GM12878 (cell line): ENCODE measurements at regions of chr10 and their contacts with region 1.

Region 1: DNA sequence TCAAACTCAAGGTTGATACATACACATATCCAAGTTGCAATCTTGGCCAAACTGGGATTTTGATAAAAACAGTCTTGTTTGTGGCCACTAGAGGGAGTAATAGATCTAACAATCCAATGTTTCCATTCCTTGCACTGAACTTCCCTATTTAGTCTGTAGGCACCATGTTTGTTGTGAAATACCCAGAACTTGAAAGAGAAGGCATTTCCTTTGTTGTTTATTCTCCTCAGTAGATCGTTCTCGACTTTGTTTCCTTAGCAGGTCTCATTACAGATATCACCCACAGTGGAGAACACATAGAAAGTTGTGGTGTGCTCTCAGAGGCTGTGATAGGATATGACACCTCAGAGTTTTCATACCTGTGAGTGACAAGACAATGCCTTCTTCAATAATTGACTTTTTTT is 70.3 kb upstream of the MXI1 start:
- DNase-seq: peak; percentile 48
- ATAC-seq: peak; percentile 83
- H3K4me3 ChIP-seq: no peak overlapping the region
- H3K27ac ChIP-seq: no peak overlapping the region
- H3K4me1 ChIP-seq: peaks cover 5% of the 10 kb centered on the region
- H3K27me3 ChIP-seq: no peaks in the 10 kb centered on the region; a peak in 1 of 4 replicates
- CTCF ChIP-seq: peak; percentile 57 to 79 (median 72)
- EP300 ChIP-seq: no peak
- POLR2A ChIP-seq: no peak
- RAD21 ChIP-seq: peak; percentile 89

Region 2: DNA sequence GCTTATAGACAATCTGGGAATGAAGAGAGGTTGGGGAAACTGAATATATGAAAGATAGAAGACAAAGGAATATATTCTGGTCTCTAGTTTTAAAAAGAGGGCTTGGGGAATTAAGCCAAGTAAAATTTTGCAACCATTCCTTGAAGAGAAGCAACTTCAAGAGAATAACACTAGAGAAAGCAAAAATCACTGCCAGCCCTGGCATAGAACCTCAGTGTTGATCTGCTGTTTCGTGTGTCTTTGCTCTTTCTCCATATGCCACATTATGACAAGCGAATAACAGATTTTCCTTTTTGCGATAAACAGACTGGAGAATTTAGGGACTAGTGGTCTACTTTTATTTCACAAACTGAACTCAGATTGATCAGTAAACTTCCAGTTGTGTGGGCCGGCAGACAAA is 346.5 kb before region 1 on chr10:
- CTCF ChIA-PET with region 1: no interaction called
- POLR2A ChIA-PET with region 1: no interaction called
- RAD21 ChIA-PET with region 1: no interaction called
- SMC1A ChIA-PET with region 1: no interaction called
- in situ Hi-C with region 1: no loop called
- intact Hi-C with region 1: no loop called
- DNase-seq: no peak
- ATAC-seq: no peak
- H3K4me3 ChIP-seq: no peak overlapping the region
- H3K27ac ChIP-seq: no peak overlapping the region
- H3K4me1 ChIP-seq: no peaks in the 10 kb centered on the region
- H3K27me3 ChIP-seq: no peaks in the 10 kb centered on the region; a peak in 1 of 4 replicates
- CTCF ChIP-seq: no peak
- EP300 ChIP-seq: no peak
- POLR2A ChIP-seq: no peak
- RAD21 ChIP-seq: no peak

Region 3: DNA sequence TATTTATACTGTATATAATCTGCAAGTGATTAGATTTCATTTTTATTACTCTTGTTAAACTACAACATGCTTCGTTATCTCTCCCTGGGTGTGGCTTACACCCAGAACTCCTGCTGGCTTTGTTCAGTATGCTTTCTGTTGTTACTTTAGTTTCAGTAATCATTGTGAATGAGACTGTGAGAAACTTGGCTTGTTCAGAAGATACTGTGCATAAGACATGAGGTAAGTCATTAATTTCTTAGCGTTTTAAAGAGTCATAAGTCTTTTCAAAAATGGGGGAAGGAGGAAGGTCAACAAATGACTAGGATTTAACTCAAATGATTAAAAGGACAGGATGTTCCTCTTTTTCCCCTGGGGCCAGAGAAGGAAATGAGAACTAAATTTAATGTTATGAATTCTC is 140.9 kb before region 1 on chr10:
- CTCF ChIA-PET with region 1: interaction called, 11 read pairs
- POLR2A ChIA-PET with region 1: no interaction called
- RAD21 ChIA-PET with region 1: interaction called, 4 read pairs
- SMC1A ChIA-PET with region 1: no interaction called
- in situ Hi-C with region 1: no loop called
- intact Hi-C with region 1: no loop called
- DNase-seq: no peak
- ATAC-seq: peak; percentile 87
- H3K4me3 ChIP-seq: no peak overlapping the region
- H3K27ac ChIP-seq: peak overlapping the region; percentile 32; the same call in 1 of the 2 replicates
- H3K4me1 ChIP-seq: peaks cover 14% of the 10 kb centered on the region
- H3K27me3 ChIP-seq: no peaks in the 10 kb centered on the region
- CTCF ChIP-seq: no peak
- EP300 ChIP-seq: no peak
- POLR2A ChIP-seq: no peak
- RAD21 ChIP-seq: no peak

Region 4: DNA sequence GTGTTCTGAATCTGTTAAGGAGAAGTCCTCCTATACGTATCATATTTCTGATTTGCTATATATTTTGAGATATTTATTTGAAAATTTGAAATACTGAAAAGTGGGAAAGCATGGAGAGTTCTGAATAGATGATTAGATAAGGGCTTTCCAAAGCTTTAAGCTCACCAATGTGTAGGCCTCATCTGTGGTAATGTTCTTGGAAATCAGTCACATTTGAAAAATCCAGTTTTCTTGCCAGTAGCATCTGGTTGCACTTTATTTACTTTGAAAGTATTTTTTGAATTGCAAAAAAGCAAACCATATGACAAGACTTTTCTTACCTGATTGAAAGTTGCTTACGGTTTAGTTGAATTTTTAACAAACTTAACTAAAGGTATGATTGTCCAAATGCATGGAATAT is 107.7 kb before region 1 on chr10:
- CTCF ChIA-PET with region 1: no interaction called
- POLR2A ChIA-PET with region 1: no interaction called
- RAD21 ChIA-PET with region 1: no interaction called
- SMC1A ChIA-PET with region 1: no interaction called
- in situ Hi-C with region 1: no loop called
- intact Hi-C with region 1: no loop called
- DNase-seq: no peak
- ATAC-seq: no peak
- H3K4me3 ChIP-seq: no peak overlapping the region
- H3K27ac ChIP-seq: no peak overlapping the region
- H3K4me1 ChIP-seq: no peaks in the 10 kb centered on the region
- H3K27me3 ChIP-seq: no peaks in the 10 kb centered on the region
- CTCF ChIP-seq: no peak
- EP300 ChIP-seq: no peak
- POLR2A ChIP-seq: no peak
- RAD21 ChIP-seq: no peak

Region 5: DNA sequence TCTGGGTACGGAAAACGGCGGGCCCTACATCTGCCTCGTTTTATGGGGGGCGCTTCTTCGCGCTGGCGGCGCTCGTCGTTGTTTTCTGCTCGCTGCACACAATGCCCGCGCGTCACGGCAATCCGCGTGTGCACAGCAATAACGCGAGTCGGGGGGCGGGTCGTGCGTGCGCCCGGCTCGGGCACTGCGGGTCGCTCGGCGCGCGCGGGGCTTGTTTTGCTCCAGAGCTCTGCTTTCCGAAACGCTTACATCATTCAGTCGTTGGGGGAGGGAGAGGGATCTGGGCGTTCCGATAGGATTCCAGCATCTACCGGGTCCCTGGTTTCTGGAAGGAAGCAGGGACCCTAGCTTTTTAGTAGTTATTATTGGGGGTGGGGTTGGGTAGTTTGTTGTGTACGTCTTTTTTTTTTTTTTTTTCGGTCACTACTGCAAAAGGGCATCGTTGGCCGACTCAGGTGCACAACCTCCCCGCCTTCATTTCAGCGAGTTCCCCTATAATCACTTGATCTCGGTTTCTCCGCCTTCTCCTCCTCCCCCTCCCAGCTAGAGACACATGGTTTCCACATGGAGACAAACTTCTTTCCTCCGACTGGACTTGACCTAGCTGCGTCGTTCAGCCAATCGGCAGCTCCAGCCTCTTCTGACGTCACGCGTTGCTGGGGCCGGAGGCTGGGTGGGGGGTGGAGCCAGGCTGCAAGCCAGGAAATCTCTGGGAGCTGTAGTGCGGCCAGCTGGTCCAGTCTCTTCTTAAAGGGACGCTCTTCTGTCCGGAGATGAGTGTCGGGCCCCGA is 73.7 kb after region 1 on chr10:
- CTCF ChIA-PET with region 1: interaction called, 26 read pairs
- POLR2A ChIA-PET with region 1: no interaction called
- RAD21 ChIA-PET with region 1: interaction called, 10 read pairs
- SMC1A ChIA-PET with region 1: interaction called, 8 read pairs
- in situ Hi-C with region 1: no loop called
- intact Hi-C with region 1: loop called (anchors 5 kb)
- DNase-seq: peak; percentile 90
- ATAC-seq: peak; percentile 87
- H3K4me3 ChIP-seq: peak overlapping the region; percentile 73
- H3K27ac ChIP-seq: no peak overlapping the region
- H3K4me1 ChIP-seq: peaks cover 22% of the 10 kb centered on the region
- H3K27me3 ChIP-seq: peaks cover 4 to 7% of the 10 kb centered on the region in 2 experiments; a peak in 3 of 4 replicates
- CTCF ChIP-seq: no peak
- EP300 ChIP-seq: peak in 1 of 2 experiments; percentile 46; a peak in 1 of 4 replicates
- POLR2A ChIP-seq: peak; percentile 65
- RAD21 ChIP-seq: no peak

Region 6: GRCh38 chr10:110279407-110279986 is 142.4 kb after region 1 on chr10:
- CTCF ChIA-PET with region 1: interaction called, 105 read pairs
- POLR2A ChIA-PET with region 1: no interaction called
- RAD21 ChIA-PET with region 1: interaction called, 42 read pairs
- SMC1A ChIA-PET with region 1: interaction called, 34 read pairs
- in situ Hi-C with region 1: loop called (anchors 5 kb)
- intact Hi-C with region 1: loop called (anchors 1 kb)
- DNase-seq: peak; percentile 28
- ATAC-seq: peak; percentile 75
- H3K4me3 ChIP-seq: no peak overlapping the region
- H3K27ac ChIP-seq: no peak overlapping the region
- H3K4me1 ChIP-seq: no peaks in the 10 kb centered on the region
- H3K27me3 ChIP-seq: no peaks in the 10 kb centered on the region
- CTCF ChIP-seq: peak; percentile 65 to 77 (median 68); a peak in 5 of 6 replicates
- EP300 ChIP-seq: no peak
- POLR2A ChIP-seq: no peak
- RAD21 ChIP-seq: peak; percentile 87

Region 7: DNA sequence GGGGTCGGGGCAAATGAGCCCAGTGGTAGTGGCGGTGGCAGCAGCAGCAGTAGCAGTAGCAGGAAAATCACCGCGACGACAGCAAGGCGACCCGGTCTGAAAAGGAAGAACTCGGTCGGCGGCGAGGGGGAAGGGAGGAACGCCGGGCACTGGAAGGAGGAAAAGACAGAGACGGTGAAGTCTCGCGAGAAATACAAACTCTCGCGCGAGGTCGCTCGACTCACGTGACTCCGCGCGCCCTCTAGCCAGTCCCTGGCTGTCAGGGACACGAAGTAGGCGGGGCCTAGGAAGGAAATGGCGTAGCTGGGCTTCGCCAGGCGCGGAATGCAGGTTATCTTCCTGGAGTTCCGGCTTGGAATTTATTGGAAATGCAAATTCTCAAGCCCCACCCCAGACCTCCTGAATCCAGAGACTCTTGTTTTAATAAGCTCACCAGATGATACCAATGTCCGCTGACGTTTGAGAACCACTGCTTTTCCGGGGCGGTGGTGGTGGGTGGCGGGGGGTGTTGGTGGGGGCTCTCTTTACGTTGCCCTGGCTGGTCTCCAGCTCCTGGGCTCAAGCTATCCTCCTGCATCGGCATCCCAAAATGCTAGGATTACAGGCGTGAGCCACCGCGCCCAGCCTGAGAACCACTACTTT is 167.8 kb after region 1 on chr10 and contains the start of gene SMNDC1:
- CTCF ChIA-PET with region 1: interaction called, 9 read pairs
- POLR2A ChIA-PET with region 1: interaction called, 8 read pairs
- RAD21 ChIA-PET with region 1: interaction called, 11 read pairs
- SMC1A ChIA-PET with region 1: interaction called, 8 read pairs
- in situ Hi-C with region 1: no loop called
- intact Hi-C with region 1: no loop called
- DNase-seq: peak; percentile 89
- ATAC-seq: peak; percentile 91
- H3K4me3 ChIP-seq: peak within 1 kb of the TSS; percentile 81
- H3K27ac ChIP-seq: peak within 1 kb of the TSS; percentile 88
- H3K4me1 ChIP-seq: peaks cover 7% of the 10 kb centered on the region; the same call in 1 of the 2 replicates
- H3K27me3 ChIP-seq: no peaks in the 10 kb centered on the region
- CTCF ChIP-seq: no peak
- EP300 ChIP-seq: no peak
- POLR2A ChIP-seq: peak; percentile 88
- RAD21 ChIP-seq: no peak
- polyA plus RNA-seq, gene SMNDC1: 10.1 to 12.9 TPM